Left lung (tissue), 14 donors: ENCODE measurements at regions of chr18 and their contacts with region 1.

Region 1: DNA sequence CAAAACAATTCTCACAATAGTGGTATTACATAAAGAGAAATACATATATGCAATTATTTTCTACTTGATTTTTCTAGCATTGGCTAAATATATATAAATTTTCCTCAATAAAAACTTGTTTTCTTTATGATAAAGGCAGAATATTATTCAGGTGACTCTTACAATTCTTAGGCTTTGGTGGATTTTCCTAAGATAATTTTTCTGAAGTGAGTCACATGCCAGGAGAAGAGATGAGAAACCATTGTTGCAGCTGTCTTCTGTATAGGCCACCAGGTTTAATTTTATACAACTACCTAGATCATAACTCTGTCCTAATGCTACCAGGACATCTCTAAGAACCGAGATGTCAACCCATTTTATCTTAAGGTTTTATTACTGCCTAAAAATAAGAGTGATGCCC is 552.4 kb upstream of the CDH2 start:
- DNase-seq: no peak
- ATAC-seq: no peak
- H3K4me3 ChIP-seq: no peak overlapping the region
- H3K27ac ChIP-seq: no peak overlapping the region
- H3K4me1 ChIP-seq: no peaks in the 10 kb centered on the region
- H3K27me3 ChIP-seq: no peaks in the 10 kb centered on the region
- CTCF ChIP-seq: no peak

Region 2: DNA sequence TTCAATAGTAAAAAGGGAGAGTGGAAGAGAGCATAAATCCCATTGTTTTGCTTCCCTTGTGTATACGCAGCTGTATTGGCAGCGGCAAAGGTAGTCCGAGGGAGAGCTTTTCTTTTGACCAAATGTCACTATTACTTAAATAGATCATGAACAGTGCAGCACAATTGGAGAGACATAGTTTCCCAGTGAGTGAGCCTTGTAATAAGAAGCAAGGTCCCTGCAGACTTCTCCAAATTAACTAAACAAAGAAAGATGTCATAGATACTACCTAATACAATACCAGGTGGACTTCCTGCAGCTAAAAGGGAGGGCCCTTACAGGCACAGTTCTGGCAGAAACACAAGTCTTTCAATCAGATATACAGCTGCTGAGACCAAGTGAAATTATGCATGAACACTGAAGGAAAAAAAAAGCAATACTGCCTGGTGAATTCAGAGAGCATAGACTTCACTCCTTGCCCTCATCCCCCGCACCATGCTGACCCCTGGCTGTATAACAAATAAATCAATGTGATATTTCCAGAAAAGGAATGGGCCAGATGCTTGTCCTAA is 147.7 kb before region 1 on chr18:
- intact Hi-C with region 1: no loop called
- DNase-seq: no peak
- ATAC-seq: no peak
- H3K4me3 ChIP-seq: no peak overlapping the region
- H3K27ac ChIP-seq: no peak overlapping the region
- H3K4me1 ChIP-seq: no peaks in the 10 kb centered on the region
- H3K27me3 ChIP-seq: no peaks in the 10 kb centered on the region
- CTCF ChIP-seq: no peak

Region 3: GRCh38 chr18:28666216-28666615 is 63.1 kb before region 1 on chr18:
- intact Hi-C with region 1: loop called in 1 of 2 experiments (anchors 10 kb)
- DNase-seq: no peak
- ATAC-seq: no peak
- H3K4me3 ChIP-seq: no peak overlapping the region
- H3K27ac ChIP-seq: no peak overlapping the region
- H3K4me1 ChIP-seq: no peaks in the 10 kb centered on the region
- H3K27me3 ChIP-seq: no peaks in the 10 kb centered on the region
- CTCF ChIP-seq: no peak

Region 4: GRCh38 chr18:29104671-29105070 is 375.4 kb after region 1 on chr18:
- intact Hi-C with region 1: no loop called
- DNase-seq: no peak
- ATAC-seq: no peak
- H3K4me3 ChIP-seq: no peak overlapping the region
- H3K27ac ChIP-seq: no peak overlapping the region
- H3K4me1 ChIP-seq: no peaks in the 10 kb centered on the region
- H3K27me3 ChIP-seq: no peaks in the 10 kb centered on the region
- CTCF ChIP-seq: no peak